ENCODE measurements at regions of chr2 and their contacts with region 1.

Region 1: GRCh38 chr2:67571785-67572718 is 174.9 kb downstream of the ETAA1 start:
- DNase-seq: peak; percentile 44 to 80
- ATAC-seq: peak; percentile 90 to 91
- H3K4me3 ChIP-seq: 0 out of 3 replicates have a peak overlapping the region, but pooled peaks have one; percentile 10
- H3K27ac ChIP-seq: peak overlapping the region; percentile 74 to 80
- H3K4me1 ChIP-seq: peaks cover 37% of the 10 kb centered on the region
- CTCF ChIP-seq: no peak
- EP300 ChIP-seq: no peak
- POLR2A ChIP-seq: no peak
- RAD21 ChIP-seq: 0 out of 5 replicates have a peak, but pooled peaks of 1 of the 2 experiments have one; percentile 15

Region 2: GRCh38 chr2:67548395-67549201 is 23.5 kb before region 1 on chr2:
- CTCF ChIA-PET with region 1: no interaction called
- POLR2A ChIA-PET with region 1: no interaction called
- DNase-seq: no peak
- ATAC-seq: no peak
- H3K4me3 ChIP-seq: no peak overlapping the region
- H3K27ac ChIP-seq: no peak overlapping the region
- H3K4me1 ChIP-seq: no peaks in the 10 kb centered on the region
- CTCF ChIP-seq: no peak
- EP300 ChIP-seq: no peak
- POLR2A ChIP-seq: no peak
- RAD21 ChIP-seq: no peak

Region 3: DNA sequence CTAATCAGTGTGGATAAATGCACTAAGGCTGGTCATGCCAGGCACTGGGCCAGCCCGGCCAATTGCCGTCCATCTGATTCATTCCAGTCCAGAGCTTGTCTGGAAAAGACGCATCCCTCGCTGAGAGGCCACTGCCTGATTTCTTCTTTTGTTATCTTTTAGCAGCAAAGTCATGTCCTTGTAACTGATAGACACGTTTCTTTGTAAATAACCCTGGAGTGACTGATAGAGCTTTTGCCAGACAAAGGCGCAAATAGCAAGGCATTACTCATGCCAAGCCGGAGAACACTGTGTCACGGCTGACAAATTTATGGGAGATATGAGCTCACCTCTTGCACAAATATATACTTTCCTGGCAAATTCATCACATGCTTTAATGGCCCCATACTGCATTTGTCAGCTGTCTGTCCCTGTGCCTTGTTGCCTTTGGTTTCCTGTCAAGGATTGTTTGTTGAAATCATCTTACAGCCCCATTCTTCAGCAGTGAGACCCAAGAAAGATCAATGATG is 10.5 kb before region 1 on chr2:
- CTCF ChIA-PET with region 1: interaction called, 3 read pairs
- POLR2A ChIA-PET with region 1: interaction called, 10 read pairs
- DNase-seq: peak; percentile 75 to 96
- ATAC-seq: peak; percentile 93 to 96
- H3K4me3 ChIP-seq: no peak overlapping the region
- H3K27ac ChIP-seq: peak overlapping the region; percentile 82 to 84
- H3K4me1 ChIP-seq: peaks cover 54% of the 10 kb centered on the region
- CTCF ChIP-seq: no peak
- EP300 ChIP-seq: peak; percentile 94 to 96; a peak in 4 of 5 replicates
- POLR2A ChIP-seq: no peak
- RAD21 ChIP-seq: peak; percentile 43 to 75

Measured in A549 (cell line).